Mucosa of descending colon (tissue), 3 donors: ENCODE measurements at regions of chr6 and their contacts with region 1.

Region 1: GRCh38 chr6:79078075-79079025 is at the start of gene PHIP:
- DNase-seq: peak; percentile 94 to 95 (median 94)
- ATAC-seq: peak; percentile 93
- H3K4me3 ChIP-seq: peak within 1 kb of the TSS; percentile 85
- H3K4me1 ChIP-seq: peaks cover 20% of the 10 kb centered on the region
- CTCF ChIP-seq: no peak
- total RNA-seq, gene PHIP: 19.3 to 34.2 (median 22.6) TPM

Region 2: GRCh38 chr6:79233611-79234149 is 155.3 kb after region 1 on chr6:
- intact Hi-C with region 1: loop called in 1 of 2 experiments (anchors 5 kb)
- DNase-seq: peak; percentile 87 to 93 (median 91)
- ATAC-seq: peak; percentile 93
- H3K4me3 ChIP-seq: peak overlapping the region; percentile 52
- H3K4me1 ChIP-seq: peaks cover 6% of the 10 kb centered on the region
- CTCF ChIP-seq: peak; percentile 19